Calu3 (cell line): ENCODE measurements at regions of chr19 and their contacts with region 1.

Region 1: GRCh38 chr19:16185123-16185767 is at the start of gene FAM32A:
- DNase-seq: peak; percentile 95
- H3K4me3 Mint-ChIP-seq: peak within 1 kb of the TSS; percentile 100
- H3K27ac Mint-ChIP-seq: peak within 1 kb of the TSS; percentile 99
- H3K4me1 Mint-ChIP-seq: no peaks in the 10 kb centered on the region
- H3K27me3 Mint-ChIP-seq: no peaks in the 10 kb centered on the region
- CTCF ChIP-seq: no peak
- total RNA-seq, gene FAM32A: 42.2 and 47.5 TPM in 2 replicates

Region 2: GRCh38 chr19:15836595-15837337 is 348.5 kb before region 1 on chr19:
- CTCF ChIA-PET with region 1: no interaction called
- intact Hi-C with region 1: loop called (anchors 10 kb)
- DNase-seq: peak; percentile 90
- H3K4me3 Mint-ChIP-seq: peak overlapping the region; percentile 67
- H3K27ac Mint-ChIP-seq: no peak overlapping the region
- H3K4me1 Mint-ChIP-seq: peaks cover 33% of the 10 kb centered on the region
- H3K27me3 Mint-ChIP-seq: peaks cover 25% of the 10 kb centered on the region
- CTCF ChIP-seq: no peak

Region 3: DNA sequence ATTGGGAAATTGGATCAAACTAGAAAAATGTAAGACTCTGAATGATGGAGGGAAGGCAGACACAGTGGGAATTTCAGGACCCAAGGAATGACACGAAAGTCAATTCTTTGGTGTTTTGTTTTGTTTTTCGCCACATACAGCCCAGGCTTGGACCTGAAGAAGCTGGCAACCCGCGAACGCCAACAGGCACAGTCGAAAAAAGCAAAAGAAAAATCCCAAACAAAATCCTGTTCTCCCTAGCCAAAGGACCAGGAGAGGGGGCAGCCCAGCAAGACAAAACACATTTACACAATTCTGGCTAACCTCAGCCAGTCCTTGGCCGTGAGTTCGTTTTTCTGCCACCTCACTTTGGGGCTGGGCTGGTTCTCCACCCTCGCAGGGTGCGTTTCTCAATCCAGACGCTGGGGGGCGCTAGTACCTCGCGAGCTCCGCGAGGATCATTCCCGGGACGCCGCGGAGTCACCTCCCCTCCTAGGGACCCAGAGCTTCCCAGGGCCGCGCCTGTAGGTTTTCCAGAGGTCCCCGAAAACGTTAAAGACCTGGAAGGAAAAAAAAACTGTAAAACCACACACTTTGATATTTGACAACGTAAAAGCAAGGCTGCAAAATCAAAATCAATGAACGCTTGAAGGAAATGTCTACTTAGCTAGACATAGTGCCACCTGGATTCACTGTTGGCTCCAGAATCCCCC is 143.8 kb before region 1 on chr19:
- CTCF ChIA-PET with region 1: interaction called, 11 read pairs
- intact Hi-C with region 1: loop called (anchors 5 kb)
- DNase-seq: peak; percentile 85
- H3K4me3 Mint-ChIP-seq: no peak overlapping the region
- H3K27ac Mint-ChIP-seq: no peak overlapping the region
- H3K4me1 Mint-ChIP-seq: no peaks in the 10 kb centered on the region
- H3K27me3 Mint-ChIP-seq: peaks cover 14% of the 10 kb centered on the region
- CTCF ChIP-seq: peak; percentile 71

Region 4: DNA sequence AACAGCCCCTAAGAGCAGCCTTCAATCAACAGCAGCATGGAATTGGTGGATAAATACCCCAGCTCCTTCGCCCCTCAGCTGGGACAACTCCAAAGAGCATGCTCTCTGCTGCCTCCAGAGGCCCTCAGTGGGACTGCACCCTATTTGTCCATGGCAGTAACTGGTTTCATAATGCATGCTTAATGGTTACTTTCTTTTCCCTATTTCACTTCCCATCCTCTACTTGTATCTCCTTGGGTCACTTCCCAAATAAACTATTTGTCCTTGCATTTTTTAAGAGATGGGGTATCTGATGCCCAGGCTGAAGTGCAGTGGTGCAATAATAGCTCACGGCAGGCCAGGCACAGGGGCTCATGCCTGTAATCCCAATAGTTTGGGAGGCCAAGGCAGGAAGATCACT is 122.5 kb before region 1 on chr19:
- CTCF ChIA-PET with region 1: no interaction called
- intact Hi-C with region 1: loop called (anchors 5 kb)
- DNase-seq: peak; percentile 56
- H3K4me3 Mint-ChIP-seq: no peak overlapping the region
- H3K27ac Mint-ChIP-seq: no peak overlapping the region
- H3K4me1 Mint-ChIP-seq: peaks cover 7% of the 10 kb centered on the region
- H3K27me3 Mint-ChIP-seq: no peaks in the 10 kb centered on the region
- CTCF ChIP-seq: peak; percentile 79

Region 5: DNA sequence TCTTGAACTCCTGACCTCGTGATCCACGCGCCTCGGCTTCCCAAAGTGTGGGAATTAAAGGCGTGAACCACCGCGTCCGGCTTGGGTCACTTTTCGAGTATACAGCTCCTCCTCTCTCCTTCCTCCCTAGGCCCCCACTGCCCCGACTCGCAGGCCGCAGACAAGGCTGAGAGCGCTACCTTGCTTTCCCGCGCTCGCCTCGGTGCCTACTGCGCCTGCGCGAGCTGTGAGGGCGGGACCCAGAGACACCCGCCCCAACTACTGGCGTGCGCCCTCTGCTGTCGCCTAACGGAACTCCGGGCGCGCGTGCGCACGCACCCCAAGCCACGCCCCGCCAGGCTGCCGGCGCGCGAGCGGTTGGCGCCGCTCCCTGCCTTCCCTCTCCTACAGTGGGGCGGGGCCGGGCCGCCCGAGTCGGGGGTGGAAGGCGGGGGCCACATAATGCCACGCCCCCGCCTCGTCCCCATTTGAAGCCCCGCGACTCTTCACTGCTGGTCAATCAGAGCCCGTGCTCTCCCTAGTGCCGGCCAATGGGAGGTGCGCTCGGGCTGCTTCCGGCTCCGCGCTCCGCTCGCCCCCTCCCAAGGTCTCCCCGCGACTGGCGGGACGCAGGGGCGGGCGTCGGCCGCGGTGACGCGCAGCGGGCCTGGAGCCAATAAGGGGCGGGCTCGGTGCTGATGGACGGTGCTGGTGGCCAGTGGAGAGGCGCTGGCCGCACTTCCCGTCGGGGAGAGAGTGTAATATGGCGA is 73.9 kb before region 1 on chr19 and contains the start of gene RAB8A:
- CTCF ChIA-PET with region 1: interaction called, 3 read pairs
- intact Hi-C with region 1: loop called (anchors 10 kb)
- DNase-seq: peak; percentile 96
- H3K4me3 Mint-ChIP-seq: peak within 1 kb of the TSS; percentile 84
- H3K27ac Mint-ChIP-seq: peak within 1 kb of the TSS; percentile 90
- H3K4me1 Mint-ChIP-seq: no peaks in the 10 kb centered on the region
- H3K27me3 Mint-ChIP-seq: no peaks in the 10 kb centered on the region
- CTCF ChIP-seq: peak; percentile 71
- total RNA-seq, gene RAB8A: 76.6 and 77.3 TPM in 2 replicates